CD14-positive monocyte (primary cell): ENCODE measurements at regions of chr6 and their contacts with region 1.

Region 1: GRCh38 chr6:44655412-44656342 is 268.2 kb downstream of the CDC5L start:
- DNase-seq: peak; percentile 80 to 96 (median 81)
- H3K4me3 ChIP-seq: no peak overlapping the region
- H3K4me3 Mint-ChIP-seq: peak overlapping the region in 1 of 2 donors; percentile 77
- H3K27ac ChIP-seq: no peak overlapping the region
- H3K27ac Mint-ChIP-seq: peak overlapping the region; percentile 6 to 86 (median 77)
- H3K4me1 ChIP-seq: peaks cover 20% of the 10 kb centered on the region in 2 donors
- H3K4me1 Mint-ChIP-seq: peaks cover 20% of the 10 kb centered on the region
- H3K27me3 ChIP-seq: peaks cover 0 to 8% of the 10 kb centered on the region in 2 donors
- H3K27me3 Mint-ChIP-seq: peaks cover 9 to 18% (median 14%) of the 10 kb centered on the region in 3 donors
- CTCF ChIP-seq: peak; percentile 92

Region 2: GRCh38 chr6:44829836-44830235 is 174.2 kb after region 1 on chr6:
- intact Hi-C with region 1: loop called in 1 of 2 experiments (anchors 10 kb)
- DNase-seq: no peak
- H3K4me3 ChIP-seq: no peak overlapping the region
- H3K4me3 Mint-ChIP-seq: no peak overlapping the region
- H3K27ac ChIP-seq: no peak overlapping the region
- H3K27ac Mint-ChIP-seq: peak overlapping the region in 1 of 7 donors; percentile 7
- H3K4me1 ChIP-seq: peaks cover 23 to 34% of the 10 kb centered on the region in 2 donors
- H3K4me1 Mint-ChIP-seq: peaks cover 29% of the 10 kb centered on the region
- H3K27me3 ChIP-seq: no peaks in the 10 kb centered on the region
- H3K27me3 Mint-ChIP-seq: peaks cover 0 to 5% (median 0%) of the 10 kb centered on the region in 3 donors
- CTCF ChIP-seq: no peak

Region 3: DNA sequence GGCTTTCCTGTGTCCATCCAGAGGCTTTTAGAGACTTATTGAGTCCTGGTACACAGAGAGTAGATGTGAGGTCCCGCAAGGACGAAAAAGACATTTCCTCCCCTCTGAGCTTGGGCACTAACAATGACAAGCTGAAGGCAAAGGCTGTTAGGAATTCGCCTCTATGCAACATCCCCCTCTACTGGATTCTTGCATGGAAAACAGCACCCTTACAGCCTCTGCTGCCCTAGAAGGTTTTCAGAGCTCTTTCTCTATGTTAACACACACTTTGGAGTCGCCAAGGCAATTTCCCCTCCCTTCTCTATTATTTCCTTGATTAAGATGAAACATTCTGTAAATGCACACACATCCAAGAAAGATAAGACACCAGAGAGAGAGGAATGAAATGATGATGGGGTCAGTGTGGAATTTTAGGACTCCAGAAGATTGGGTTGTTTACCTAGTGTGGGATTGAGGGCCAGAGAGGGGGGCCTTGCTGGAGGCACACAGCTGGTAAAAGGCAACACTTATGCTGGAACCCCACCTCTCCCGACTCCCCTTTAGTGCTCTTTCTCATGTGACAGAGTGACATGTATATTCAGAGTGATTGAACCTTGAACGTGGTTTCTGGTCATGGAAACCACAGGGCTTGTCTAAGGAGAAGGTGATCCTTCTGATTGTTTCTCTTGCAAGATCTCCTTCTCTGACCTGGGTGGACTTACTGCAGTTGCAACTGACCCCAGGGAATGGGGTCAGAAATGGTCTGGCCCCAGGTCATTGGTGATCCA is 1059.2 kb after region 1 on chr6:
- intact Hi-C with region 1: loop called (anchors 5 to 10 kb)
- DNase-seq: peak; percentile 50 to 79 (median 70)
- H3K4me3 ChIP-seq: no peak overlapping the region
- H3K4me3 Mint-ChIP-seq: no peak overlapping the region
- H3K27ac ChIP-seq: no peak overlapping the region
- H3K27ac Mint-ChIP-seq: peak overlapping the region in 3 of 7 donors; percentile 66 to 82 (median 69)
- H3K4me1 ChIP-seq: peaks cover 23 to 29% of the 10 kb centered on the region in 2 donors
- H3K4me1 Mint-ChIP-seq: peaks cover 37% of the 10 kb centered on the region
- H3K27me3 ChIP-seq: no peaks in the 10 kb centered on the region
- H3K27me3 Mint-ChIP-seq: peaks cover 0 to 7% (median 0%) of the 10 kb centered on the region in 3 donors
- CTCF ChIP-seq: peak; percentile 78

Region 4: DNA sequence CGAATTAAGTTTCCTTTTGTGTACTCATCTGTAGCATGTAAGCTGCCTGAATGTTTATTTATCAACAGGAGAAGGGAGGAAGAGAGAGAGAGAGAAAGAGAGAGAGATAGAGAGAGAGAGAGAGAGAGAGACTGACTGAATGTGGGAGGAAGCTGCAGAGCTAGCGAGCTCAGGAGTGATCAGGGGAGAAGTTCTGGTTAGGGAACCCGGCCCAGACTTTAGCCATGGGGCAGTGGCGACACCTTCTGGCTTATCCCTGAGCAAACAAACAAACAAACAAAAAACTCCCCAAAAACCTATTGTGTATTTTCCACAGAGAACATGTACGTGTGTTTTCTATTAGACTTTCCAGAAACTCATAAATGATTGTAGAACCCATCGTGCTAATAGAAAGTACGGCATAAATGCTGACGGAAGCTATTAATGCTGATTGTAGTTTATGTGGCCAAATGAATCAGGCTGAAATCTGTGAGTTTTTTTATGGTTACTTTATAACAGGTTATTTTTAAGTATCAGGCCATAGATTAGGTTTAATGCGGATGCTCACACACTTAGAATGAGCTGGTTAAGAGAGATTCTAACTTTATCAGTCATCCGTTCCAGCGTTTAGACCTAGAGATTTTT is 1267.2 kb after region 1 on chr6:
- intact Hi-C with region 1: loop called (anchors 5 kb)
- DNase-seq: peak; percentile 39 to 58 (median 56)
- H3K4me3 ChIP-seq: no peak overlapping the region
- H3K4me3 Mint-ChIP-seq: no peak overlapping the region
- H3K27ac ChIP-seq: no peak overlapping the region
- H3K27ac Mint-ChIP-seq: no peak overlapping the region
- H3K4me1 ChIP-seq: no peaks in the 10 kb centered on the region
- H3K4me1 Mint-ChIP-seq: peaks cover 5% of the 10 kb centered on the region
- H3K27me3 ChIP-seq: no peaks in the 10 kb centered on the region
- H3K27me3 Mint-ChIP-seq: peaks cover 1 to 2% (median 2%) of the 10 kb centered on the region in 3 donors
- CTCF ChIP-seq: peak; percentile 72